Ascending aorta (tissue), 2 donors: ENCODE measurements at regions of chr2 and their contacts with region 1.

Region 1: DNA sequence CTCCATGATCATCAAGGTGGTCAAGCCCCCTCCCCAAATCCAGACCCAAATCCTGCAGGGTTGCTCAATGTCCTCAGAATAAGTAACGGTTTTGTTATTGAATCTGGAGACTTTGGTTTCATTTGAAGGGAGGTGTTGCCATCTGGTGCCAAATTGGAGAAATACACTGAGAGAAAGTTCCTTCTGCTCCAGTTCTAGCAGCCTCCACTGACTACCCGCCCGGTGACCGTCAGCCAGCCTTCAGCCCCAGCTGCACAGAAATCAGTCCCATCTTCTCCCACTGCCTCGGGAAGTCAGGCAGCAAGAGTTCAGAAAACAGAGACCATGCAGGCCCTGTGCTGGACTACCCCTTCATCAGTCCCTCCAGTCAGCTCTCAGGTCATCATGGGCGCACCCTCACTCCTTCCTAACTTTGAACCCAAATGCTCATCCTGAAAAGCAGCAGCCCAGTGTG is 38.7 kb downstream of the PKDCC start:
- DNase-seq: peak in 1 of 2 donors; percentile 76
- H3K4me3 ChIP-seq: no peak overlapping the region
- H3K27ac ChIP-seq: no peak overlapping the region
- H3K4me1 ChIP-seq: peaks cover 0 to 10% of the 10 kb centered on the region in 2 donors
- H3K27me3 ChIP-seq: no peaks in the 10 kb centered on the region
- CTCF ChIP-seq: peak; percentile 77 to 83 (median 79)

Region 2: GRCh38 chr2:41853427-41854216 is 232.9 kb before region 1 on chr2:
- intact Hi-C with region 1: loop called (anchors 1 kb)
- DNase-seq: no peak
- H3K4me3 ChIP-seq: no peak overlapping the region
- H3K27ac ChIP-seq: no peak overlapping the region
- H3K4me1 ChIP-seq: no peaks in the 10 kb centered on the region
- H3K27me3 ChIP-seq: no peaks in the 10 kb centered on the region
- CTCF ChIP-seq: peak; percentile 54 to 77 (median 66)

Region 3: DNA sequence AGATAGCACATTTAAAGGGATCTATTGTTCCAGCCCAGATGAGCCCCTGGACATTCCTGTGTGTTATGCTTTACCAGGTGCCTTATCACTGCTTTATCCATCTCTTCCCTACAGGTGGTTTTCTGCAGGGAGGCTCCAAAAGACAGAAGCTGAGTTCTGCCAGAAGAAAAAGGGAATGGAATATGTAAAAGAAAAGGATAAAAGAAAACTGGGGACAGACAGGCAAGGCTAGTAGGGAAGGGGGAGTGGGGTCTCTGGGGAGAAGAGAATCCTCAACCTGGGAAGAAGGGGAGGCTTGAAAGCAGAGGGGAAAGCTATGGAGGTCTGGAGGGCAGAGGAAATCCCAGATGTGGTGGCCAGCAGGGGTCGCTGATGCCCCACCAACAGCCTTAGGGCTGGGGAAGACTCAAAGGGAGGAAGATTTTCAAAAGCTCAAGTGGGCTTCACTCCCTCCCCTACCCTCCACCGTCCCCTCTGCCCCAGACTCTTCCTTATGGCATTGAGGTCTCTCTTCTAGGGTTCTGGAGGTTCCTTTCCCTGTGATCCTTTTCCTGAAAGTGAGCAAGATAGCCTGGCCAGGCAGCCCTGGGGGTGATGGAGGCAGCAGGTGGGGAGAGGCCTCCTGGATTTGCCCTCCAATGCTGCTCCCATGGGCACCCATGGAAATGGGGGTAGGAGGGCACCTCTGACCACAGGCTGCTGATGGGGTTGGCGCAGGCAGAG is 216.8 kb before region 1 on chr2:
- intact Hi-C with region 1: loop called (anchors 1 kb)
- DNase-seq: peak in 1 of 2 donors; percentile 85
- H3K4me3 ChIP-seq: no peak overlapping the region
- H3K27ac ChIP-seq: no peak overlapping the region
- H3K4me1 ChIP-seq: peaks cover 4 to 17% of the 10 kb centered on the region in 2 donors
- H3K27me3 ChIP-seq: no peaks in the 10 kb centered on the region
- CTCF ChIP-seq: peak; percentile 76 to 92 (median 88)

Region 4: GRCh38 chr2:42047488-42048298 is 38.8 kb before region 1 on chr2 and contains the start of gene PKDCC:
- intact Hi-C with region 1: loop called (anchors 2 kb)
- DNase-seq: peak in 1 of 2 donors; percentile 92
- H3K4me3 ChIP-seq: peak within 1 kb of the TSS; percentile 84 to 97
- H3K27ac ChIP-seq: peak within 1 kb of the TSS; percentile 97 to 98
- H3K4me1 ChIP-seq: peaks cover 3 to 28% of the 10 kb centered on the region in 2 donors
- H3K27me3 ChIP-seq: no peaks in the 10 kb centered on the region
- CTCF ChIP-seq: no peak
- total RNA-seq, gene PKDCC: 210 TPM

Region 5: GRCh38 chr2:42256505-42256904 is 170.0 kb after region 1 on chr2:
- intact Hi-C with region 1: no loop called
- DNase-seq: no peak
- H3K4me3 ChIP-seq: no peak overlapping the region
- H3K27ac ChIP-seq: no peak overlapping the region
- H3K4me1 ChIP-seq: no peaks in the 10 kb centered on the region
- H3K27me3 ChIP-seq: no peaks in the 10 kb centered on the region
- CTCF ChIP-seq: no peak